ENCODE measurements at regions of chr18 and their contacts with region 1.

Region 1: GRCh38 chr18:5879479-5879882 is 15.8 kb downstream of the TMEM200C start:
- DNase-seq: no peak
- ATAC-seq: peak; percentile 25
- H3K4me3 ChIP-seq: no peak overlapping the region
- H3K4me1 ChIP-seq: no peaks in the 10 kb centered on the region
- CTCF ChIP-seq: peak; percentile 53

Region 2: GRCh38 chr18:6482198-6482977 is 602.9 kb after region 1 on chr18:
- intact Hi-C with region 1: loop called in 1 of 2 experiments (anchors 10 kb)
- DNase-seq: peak; percentile 47 to 58 (median 57)
- ATAC-seq: peak; percentile 76
- H3K4me3 ChIP-seq: no peak overlapping the region
- H3K4me1 ChIP-seq: no peaks in the 10 kb centered on the region
- CTCF ChIP-seq: peak; percentile 21